OCI-LY7 (cell line): ENCODE measurements at regions of chr3 and their contacts with region 1.

Region 1: DNA sequence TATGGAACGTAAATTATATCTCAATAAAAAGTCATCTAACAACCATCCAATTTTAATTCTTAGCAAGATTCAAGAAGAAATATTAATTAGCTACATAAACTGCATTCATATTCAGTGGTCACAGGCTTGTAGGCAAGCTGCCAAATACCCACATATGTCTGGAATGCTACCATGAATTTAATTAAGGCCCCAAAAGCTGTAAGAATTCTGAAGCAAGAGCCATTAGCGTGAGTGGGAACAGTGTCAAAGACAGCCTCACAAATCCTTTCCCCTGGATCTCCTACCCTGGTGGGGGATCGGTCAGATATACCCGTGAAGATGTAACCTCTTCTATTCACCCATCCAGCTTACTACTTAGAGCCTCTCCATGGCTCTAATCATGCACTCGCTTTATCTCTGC is 40.0 kb downstream of the ATG7 start:
- DNase-seq: no peak
- H3K4me3 ChIP-seq: no peak overlapping the region
- H3K27ac ChIP-seq: no peak overlapping the region
- H3K4me1 ChIP-seq: no peaks in the 10 kb centered on the region
- CTCF ChIP-seq: no peak

Region 2: DNA sequence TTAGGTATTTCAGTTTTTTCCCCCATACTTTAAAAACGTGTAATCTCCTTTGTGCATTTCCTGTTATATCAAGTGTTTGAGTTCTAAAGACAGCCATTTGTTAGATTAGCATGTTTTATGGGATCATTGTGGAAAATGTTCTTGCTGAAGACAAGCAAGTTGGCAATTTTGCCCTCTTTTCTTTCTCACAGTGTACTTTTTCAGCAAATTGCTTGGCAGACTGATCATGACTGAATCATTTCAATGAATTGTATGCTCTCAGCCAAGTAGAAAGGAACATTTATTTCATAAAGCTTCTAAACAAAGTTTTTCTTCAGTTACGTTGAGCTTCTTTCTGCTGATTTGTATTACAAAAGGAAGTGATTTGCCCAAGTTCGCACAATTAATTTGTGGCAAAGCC is 11.6 kb after region 1 on chr3:
- CTCF ChIA-PET with region 1: no interaction called
- POLR2A ChIA-PET with region 1: no interaction called
- intact Hi-C with region 1: no loop called
- DNase-seq: no peak
- H3K4me3 ChIP-seq: no peak overlapping the region
- H3K27ac ChIP-seq: no peak overlapping the region
- H3K4me1 ChIP-seq: no peaks in the 10 kb centered on the region
- CTCF ChIP-seq: no peak

Region 3: DNA sequence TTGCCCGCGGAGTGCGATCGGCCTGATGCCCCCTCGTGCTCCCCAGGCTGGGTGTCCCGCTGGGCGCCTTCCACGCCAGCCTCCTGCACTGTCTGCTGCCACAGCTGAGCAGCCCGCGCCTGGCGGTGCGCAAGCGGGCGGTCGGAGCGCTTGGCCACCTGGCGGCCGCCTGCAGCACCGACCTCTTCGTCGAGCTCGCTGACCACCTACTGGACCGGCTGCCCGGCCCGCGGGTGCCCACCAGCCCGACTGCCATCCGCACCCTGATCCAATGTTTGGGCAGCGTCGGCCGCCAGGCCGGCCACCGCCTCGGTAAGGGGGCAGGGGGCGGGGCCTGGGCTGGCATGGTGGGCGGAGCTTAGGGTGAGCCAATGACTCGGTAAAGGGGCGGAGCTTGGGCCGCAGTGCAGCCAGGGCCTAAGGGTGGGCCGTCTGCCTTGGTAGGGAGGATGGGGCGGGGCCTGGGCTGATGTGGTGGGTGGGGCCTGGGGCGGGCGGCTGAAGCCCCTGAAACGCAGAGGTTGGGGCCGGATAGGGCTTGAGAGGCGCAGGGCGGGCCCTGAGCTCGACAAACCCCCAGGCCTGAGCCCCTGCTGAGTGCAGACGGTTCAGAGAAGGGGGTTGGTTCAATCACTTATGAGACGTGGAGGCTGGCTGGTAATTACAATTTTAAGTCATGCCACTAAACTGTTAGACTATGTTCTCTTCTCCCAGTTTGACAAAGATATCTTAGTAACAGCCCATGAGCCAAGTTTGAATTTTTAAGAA is 1498.0 kb after region 1 on chr3:
- CTCF ChIA-PET with region 1: interaction called, 14 read pairs
- POLR2A ChIA-PET with region 1: no interaction called
- intact Hi-C with region 1: no loop called
- DNase-seq: peak; percentile 93
- H3K4me3 ChIP-seq: peak overlapping the region; percentile 61
- H3K27ac ChIP-seq: no peak overlapping the region
- H3K4me1 ChIP-seq: peaks cover 9% of the 10 kb centered on the region
- CTCF ChIP-seq: peak; percentile 70